H1 (cell line): ENCODE measurements at regions of chr14 and their contacts with region 1.

Region 1: GRCh38 chr14:76710056-76711010 is 50.9 kb upstream of the VASH1 start:
- DNase-seq: peak in 1 of 2 experiments; percentile 46
- H3K4me3 ChIP-seq: no peak overlapping the region
- H3K27ac ChIP-seq: no peak overlapping the region
- H3K4me1 ChIP-seq: no peaks in the 10 kb centered on the region
- H3K27me3 ChIP-seq: no peaks in the 10 kb centered on the region
- CTCF ChIP-seq: peak; percentile 1 to 72 (median 60)
- EP300 ChIP-seq: no peak
- POLR2A ChIP-seq: no peak
- RAD21 ChIP-seq: peak; percentile 74 to 76

Region 2: DNA sequence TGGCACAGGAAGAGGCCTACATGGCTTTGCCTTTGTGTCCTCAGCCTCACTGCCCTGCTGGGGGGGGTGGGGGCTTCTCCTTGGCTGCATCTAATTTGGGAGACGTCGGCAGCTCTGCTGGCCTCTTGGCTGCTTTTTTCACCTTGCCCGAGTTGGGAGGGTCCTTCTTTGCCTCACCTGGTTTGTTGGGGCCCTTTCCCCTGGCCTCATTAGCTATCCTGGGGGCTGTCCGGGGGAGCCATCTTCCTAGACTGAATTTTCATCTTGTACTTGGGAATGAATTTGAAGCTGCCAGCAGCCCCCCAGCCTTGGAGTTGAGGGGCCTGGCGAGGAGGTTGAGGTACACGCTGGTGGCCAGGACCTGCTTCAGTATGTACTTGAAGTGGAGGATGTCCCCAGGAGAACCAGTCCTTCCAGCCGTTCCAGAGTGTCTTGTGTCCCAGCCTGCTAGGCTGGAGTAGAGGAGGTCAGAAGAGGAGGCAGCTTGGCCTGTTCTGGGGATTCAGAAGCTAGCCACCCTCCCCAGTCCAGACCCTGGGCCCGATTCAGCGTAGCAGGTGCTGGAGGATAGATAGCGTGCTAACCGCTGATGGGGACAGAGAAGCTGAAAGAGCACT is 19.7 kb before region 1 on chr14:
- CTCF ChIA-PET with region 1: interaction called, 18 read pairs
- POLR2A ChIA-PET with region 1: no interaction called
- DNase-seq: peak in 1 of 2 experiments; percentile 23
- H3K4me3 ChIP-seq: no peak overlapping the region
- H3K27ac ChIP-seq: no peak overlapping the region; the same call in 1 of the 2 replicates
- H3K4me1 ChIP-seq: no peaks in the 10 kb centered on the region
- H3K27me3 ChIP-seq: no peaks in the 10 kb centered on the region
- CTCF ChIP-seq: no peak
- EP300 ChIP-seq: no peak
- POLR2A ChIP-seq: no peak
- RAD21 ChIP-seq: no peak

Region 3: DNA sequence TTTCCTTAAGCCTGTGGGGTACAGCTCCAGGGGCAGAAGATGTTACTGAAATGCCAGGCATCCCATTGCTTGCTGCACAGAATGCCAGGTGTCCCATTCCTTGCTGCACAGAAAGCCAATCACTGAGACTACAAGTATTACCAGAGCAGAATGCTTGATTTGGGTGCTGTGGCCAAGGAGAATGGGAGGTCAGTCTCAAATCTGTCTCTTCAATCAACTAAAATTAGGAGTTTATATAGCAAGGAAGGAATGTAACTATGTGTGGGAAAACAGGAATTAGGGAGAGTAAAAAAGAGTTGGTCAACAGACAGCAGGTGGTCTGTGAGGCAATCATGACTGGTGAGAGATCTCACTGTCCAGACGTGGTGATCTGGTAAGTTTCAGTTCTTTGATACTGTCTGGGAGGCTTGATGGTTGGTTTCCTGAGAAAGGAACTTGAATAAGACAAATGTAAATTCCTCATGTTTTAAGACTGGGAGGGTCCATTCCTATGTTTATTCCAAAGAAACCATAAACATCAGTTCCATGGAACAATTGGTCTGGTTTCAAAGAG is 19.7 kb after region 1 on chr14:
- CTCF ChIA-PET with region 1: interaction called, 33 read pairs
- POLR2A ChIA-PET with region 1: no interaction called
- DNase-seq: no peak
- H3K4me3 ChIP-seq: no peak overlapping the region
- H3K27ac ChIP-seq: no peak overlapping the region
- H3K4me1 ChIP-seq: peaks cover 0 to 5% (median 1%) of the 10 kb centered on the region in 4 experiments; a peak in 4 of 7 replicates
- H3K27me3 ChIP-seq: no peaks in the 10 kb centered on the region
- CTCF ChIP-seq: no peak
- EP300 ChIP-seq: no peak
- POLR2A ChIP-seq: no peak
- RAD21 ChIP-seq: no peak

Region 4: DNA sequence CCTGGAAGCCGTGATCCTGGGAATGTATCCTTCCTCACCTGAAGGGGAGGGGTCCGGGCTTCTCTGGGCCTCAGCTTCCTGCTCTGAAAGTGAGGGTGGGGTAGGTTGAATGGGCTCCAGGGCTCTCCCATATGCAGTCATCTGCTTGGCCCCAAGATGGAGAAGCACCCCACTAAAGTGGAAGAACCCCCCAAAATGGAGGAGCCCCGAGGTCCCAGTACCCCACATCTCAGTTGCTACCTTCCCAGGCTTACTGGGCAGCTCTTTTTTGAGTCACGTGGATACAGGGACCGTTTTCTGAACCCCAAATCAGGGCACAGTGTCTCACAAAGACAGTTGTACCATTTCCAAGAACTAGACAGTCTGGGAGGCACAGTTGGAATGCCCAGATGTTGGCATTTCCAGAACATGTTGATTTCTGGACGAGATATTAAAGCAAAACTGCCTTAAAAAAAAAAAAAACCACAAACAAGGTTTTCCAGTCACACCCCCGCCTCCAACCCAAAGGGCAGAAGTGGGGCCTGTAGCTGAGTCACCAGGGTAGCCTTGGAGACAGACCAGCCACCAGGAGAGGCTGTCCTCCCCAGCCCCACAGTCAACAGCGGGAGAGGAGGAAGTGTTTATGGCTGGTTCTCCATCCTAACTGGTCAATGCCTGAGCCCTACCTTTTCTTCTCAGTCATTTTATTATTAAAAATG is 63.0 kb after region 1 on chr14:
- CTCF ChIA-PET with region 1: interaction called, 234 read pairs
- POLR2A ChIA-PET with region 1: interaction called, 6 read pairs
- DNase-seq: no peak
- H3K4me3 ChIP-seq: no peak overlapping the region
- H3K27ac ChIP-seq: no peak overlapping the region
- H3K4me1 ChIP-seq: peaks cover 0 to 21% (median 11%) of the 10 kb centered on the region in 4 experiments; a peak in 5 of 7 replicates
- H3K27me3 ChIP-seq: peaks cover 0 to 5% (median 2%) of the 10 kb centered on the region in 4 experiments; a peak in 4 of 7 replicates
- CTCF ChIP-seq: no peak
- EP300 ChIP-seq: no peak
- POLR2A ChIP-seq: no peak
- RAD21 ChIP-seq: no peak

Region 5: GRCh38 chr14:76812211-76813044 is 102.1 kb after region 1 on chr14 and contains the start of gene ANGEL1:
- CTCF ChIA-PET with region 1: interaction called, 18 read pairs
- POLR2A ChIA-PET with region 1: no interaction called
- DNase-seq: peak; percentile 82 to 97
- H3K4me3 ChIP-seq: peak within 1 kb of the TSS; percentile 74 to 82 (median 80)
- H3K27ac ChIP-seq: peak within 1 kb of the TSS; percentile 76
- H3K4me1 ChIP-seq: peaks cover 2 to 9% (median 3%) of the 10 kb centered on the region in 4 experiments; a peak in 3 of 7 replicates
- H3K27me3 ChIP-seq: no peaks in the 10 kb centered on the region; a peak in 2 of 7 replicates
- CTCF ChIP-seq: no peak
- EP300 ChIP-seq: peak; percentile 6 to 88; a peak in 2 of 3 replicates
- POLR2A ChIP-seq: peak; percentile 76 to 90
- RAD21 ChIP-seq: no peak
- total RNA-seq, gene ANGEL1: 23.1 and 26.8 TPM in 2 replicates